Activated CD8-positive, alpha-beta T cell treated with anti-CD3 and anti-CD28 coated beads, Interleukin-2, amount 10 ng/mL, durations not matched to agents 7 days and 5 days (primary cell): ENCODE measurements at regions of chr10 and their contacts with region 1.

Region 1: DNA sequence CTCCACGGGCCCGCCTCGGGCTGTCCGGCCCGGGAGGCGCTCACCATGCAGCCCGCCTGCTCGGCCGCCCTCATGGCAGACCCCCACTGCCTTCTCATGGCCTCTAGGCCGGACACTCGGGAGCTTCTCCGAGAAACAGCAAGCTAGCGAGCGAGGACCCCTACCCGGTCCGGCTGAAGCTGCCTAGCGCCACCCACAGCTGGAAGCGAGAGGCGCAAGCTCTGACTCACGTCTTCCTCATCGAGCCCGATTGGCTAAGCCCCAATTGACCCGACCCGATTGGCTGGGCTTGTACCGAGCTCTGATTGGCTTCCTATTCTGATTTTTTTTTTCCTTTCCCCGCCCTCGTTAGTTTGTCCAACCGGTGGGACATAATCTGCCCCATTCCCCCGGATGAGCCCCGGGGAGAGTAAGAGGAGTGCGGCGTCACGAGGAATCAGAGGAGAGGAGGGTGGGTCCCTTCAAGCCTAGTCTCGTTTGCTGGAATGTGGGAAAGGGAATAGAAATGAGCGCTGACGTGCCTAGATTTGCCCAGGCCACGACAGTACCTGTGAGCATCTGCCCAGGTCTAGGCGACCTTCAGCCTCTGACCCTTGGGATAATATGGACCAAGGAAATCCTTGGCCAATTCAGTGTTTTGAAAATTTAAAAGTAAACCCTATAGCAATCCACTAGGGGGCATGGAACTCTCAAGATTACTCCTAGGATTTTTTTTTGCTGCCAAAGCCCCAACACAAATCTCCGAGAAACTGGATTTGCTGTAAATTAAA is at the start of gene TYSND1:
- DNase-seq: peak; percentile 96
- ATAC-seq: peak; percentile 86
- H3K4me3 Mint-ChIP-seq: peak within 1 kb of the TSS; percentile 92
- H3K27ac Mint-ChIP-seq: peak within 1 kb of the TSS; percentile 99
- H3K4me1 Mint-ChIP-seq: peaks cover 35% of the 10 kb centered on the region
- H3K27me3 Mint-ChIP-seq: no peaks in the 10 kb centered on the region
- total RNA-seq, gene TYSND1: 12.0 to 13.4 TPM

Region 2: DNA sequence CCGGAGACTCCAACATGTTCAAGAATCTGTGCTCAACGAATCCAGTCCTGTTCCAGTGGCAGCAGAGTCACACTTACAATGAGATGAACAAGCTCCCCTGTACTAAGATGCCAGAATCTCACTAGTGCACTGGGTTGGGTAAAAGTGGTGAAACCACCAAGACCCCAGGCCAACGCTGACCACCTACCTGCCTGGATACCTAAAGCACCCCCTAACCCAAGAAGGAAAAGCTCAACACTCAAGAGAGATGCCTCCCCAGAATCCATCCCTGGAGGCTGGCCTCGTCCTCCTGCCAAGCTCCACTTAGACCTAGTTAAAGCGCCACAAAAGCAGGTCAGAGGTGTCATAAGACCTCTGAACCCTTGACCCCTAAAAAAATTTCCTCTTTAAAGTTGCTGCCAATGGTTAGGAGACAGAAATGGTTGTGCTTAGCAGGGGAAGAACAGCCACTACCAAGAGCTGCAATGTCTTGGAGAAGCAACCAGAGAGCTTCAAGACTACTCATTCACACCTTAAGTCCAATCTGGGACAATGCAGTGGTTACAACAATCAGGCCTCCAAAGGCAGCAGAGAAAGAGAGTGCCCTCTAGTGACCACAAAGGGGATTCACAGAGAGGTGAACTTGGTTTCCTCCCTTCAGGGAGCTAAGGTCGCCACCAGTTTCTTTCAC is 188.7 kb before region 1 on chr10:
- CTCF ChIA-PET with region 1: interaction called, 10 read pairs
- POLR2A ChIA-PET with region 1: no interaction called
- DNase-seq: peak; percentile 50
- ATAC-seq: peak; percentile 78
- H3K4me3 Mint-ChIP-seq: no peak overlapping the region
- H3K27ac Mint-ChIP-seq: no peak overlapping the region
- H3K4me1 Mint-ChIP-seq: no peaks in the 10 kb centered on the region
- H3K27me3 Mint-ChIP-seq: peaks cover 16% of the 10 kb centered on the region

Region 3: GRCh38 chr10:70115948-70116682 is 30.6 kb before region 1 on chr10:
- CTCF ChIA-PET with region 1: interaction called, 97 read pairs
- POLR2A ChIA-PET with region 1: interaction called, 9 read pairs
- DNase-seq: peak; percentile 72
- ATAC-seq: peak; percentile 78
- H3K4me3 Mint-ChIP-seq: no peak overlapping the region
- H3K27ac Mint-ChIP-seq: peak overlapping the region; percentile 53
- H3K4me1 Mint-ChIP-seq: peaks cover 24% of the 10 kb centered on the region
- H3K27me3 Mint-ChIP-seq: no peaks in the 10 kb centered on the region

Region 4: DNA sequence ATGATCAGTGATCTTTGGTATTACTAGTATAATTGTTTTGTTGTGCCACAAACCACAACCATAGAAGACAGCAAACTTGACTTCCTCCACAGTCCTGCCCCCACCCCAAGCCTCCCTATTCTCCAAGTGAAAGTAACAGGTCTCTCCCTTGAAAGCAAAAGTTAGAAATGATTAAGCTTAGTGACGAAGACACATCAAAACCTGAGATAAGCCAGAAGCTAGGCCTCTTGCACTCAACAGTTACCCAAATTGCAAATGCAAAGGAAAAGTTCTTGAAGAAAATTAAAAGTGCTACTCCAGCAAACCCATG is 16.2 kb after region 1 on chr10:
- CTCF ChIA-PET with region 1: interaction called, 67 read pairs
- POLR2A ChIA-PET with region 1: interaction called, 6 read pairs
- DNase-seq: peak; percentile 83
- ATAC-seq: peak; percentile 90
- H3K4me3 Mint-ChIP-seq: peak overlapping the region; percentile 61
- H3K27ac Mint-ChIP-seq: peak overlapping the region; percentile 88
- H3K4me1 Mint-ChIP-seq: peaks cover 61% of the 10 kb centered on the region
- H3K27me3 Mint-ChIP-seq: no peaks in the 10 kb centered on the region

Region 5: GRCh38 chr10:70197235-70197945 is 50.7 kb after region 1 on chr10:
- CTCF ChIA-PET with region 1: interaction called, 70 read pairs
- POLR2A ChIA-PET with region 1: interaction called, 3 read pairs
- DNase-seq: peak; percentile 71
- ATAC-seq: peak; percentile 79
- H3K4me3 Mint-ChIP-seq: peak overlapping the region; percentile 25
- H3K27ac Mint-ChIP-seq: peak overlapping the region; percentile 79
- H3K4me1 Mint-ChIP-seq: peaks cover 47% of the 10 kb centered on the region
- H3K27me3 Mint-ChIP-seq: no peaks in the 10 kb centered on the region

Region 6: GRCh38 chr10:70363971-70364771 is 217.5 kb after region 1 on chr10:
- CTCF ChIA-PET with region 1: interaction called, 31 read pairs
- POLR2A ChIA-PET with region 1: interaction called, 4 read pairs
- DNase-seq: peak; percentile 92
- ATAC-seq: peak; percentile 99
- H3K4me3 Mint-ChIP-seq: no peak overlapping the region
- H3K27ac Mint-ChIP-seq: peak overlapping the region; percentile 65
- H3K4me1 Mint-ChIP-seq: peaks cover 16% of the 10 kb centered on the region
- H3K27me3 Mint-ChIP-seq: no peaks in the 10 kb centered on the region